Activated CD8-positive, alpha-beta T cell treated with anti-CD3 and anti-CD28 coated beads, Interleukin-2, amount 10 ng/mL, durations not matched to agents 7 days and 5 days (primary cell): ENCODE measurements at regions of chr11 and their contacts with region 1.

Region 1: DNA sequence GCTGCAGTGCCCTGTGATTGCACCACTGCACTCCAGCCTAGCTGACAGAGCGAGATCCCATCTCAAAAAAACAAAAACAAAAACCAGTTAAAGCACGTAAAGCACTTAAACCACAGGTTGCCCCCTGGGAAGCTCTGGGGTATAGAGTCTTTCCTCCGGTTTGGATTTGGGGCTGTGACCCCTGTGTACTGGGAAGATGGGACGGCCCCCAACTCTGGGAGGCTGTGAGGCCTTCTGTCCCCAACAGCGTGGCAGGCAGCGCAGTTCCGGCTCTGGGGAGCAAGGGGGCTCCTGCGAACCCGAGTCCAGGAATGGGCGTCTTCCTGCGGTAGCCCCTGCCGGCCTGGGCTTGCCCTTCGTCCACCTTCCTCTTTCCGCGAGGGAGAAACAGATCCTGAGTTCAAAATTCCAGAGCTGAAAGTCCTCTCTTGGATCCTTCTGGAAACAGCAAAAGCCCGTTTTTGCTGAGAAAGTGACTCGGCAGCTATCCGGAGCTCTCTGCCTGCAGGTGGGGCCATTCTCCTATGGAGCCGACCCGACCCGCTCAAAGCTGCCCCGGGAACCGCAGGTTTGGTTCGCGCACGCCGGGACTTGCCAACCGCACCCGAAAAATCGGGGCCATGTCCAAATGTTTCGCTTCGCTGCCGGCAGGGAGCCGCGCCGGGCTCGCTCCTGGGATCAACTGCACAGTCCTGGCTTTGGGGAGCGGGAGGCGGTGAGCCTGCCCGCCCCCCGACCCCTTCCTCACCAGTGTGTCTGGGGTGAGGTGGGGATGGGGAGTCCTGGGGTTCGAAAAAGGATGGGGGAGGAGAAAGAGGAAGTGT is 36.3 kb upstream of the POLA2 start:
- DNase-seq: peak; percentile 67
- ATAC-seq: peak; percentile 86
- H3K4me3 Mint-ChIP-seq: peak overlapping the region; percentile 72
- H3K27ac Mint-ChIP-seq: no peak overlapping the region
- H3K4me1 Mint-ChIP-seq: peaks cover 27% of the 10 kb centered on the region
- H3K27me3 Mint-ChIP-seq: peaks cover 18% of the 10 kb centered on the region

Region 2: GRCh38 chr11:64996710-64997380 is 228.6 kb before region 1 on chr11 and contains the start of gene BATF2:
- CTCF ChIA-PET with region 1: no interaction called
- POLR2A ChIA-PET with region 1: no interaction called
- DNase-seq: peak; percentile 41
- ATAC-seq: peak; percentile 67
- H3K4me3 Mint-ChIP-seq: peak within 1 kb of the TSS; percentile 46
- H3K27ac Mint-ChIP-seq: peak within 1 kb of the TSS; percentile 79
- H3K4me1 Mint-ChIP-seq: peaks cover 33% of the 10 kb centered on the region
- H3K27me3 Mint-ChIP-seq: peaks cover 2% of the 10 kb centered on the region
- total RNA-seq, gene BATF2: 0.50 to 0.99 TPM

Region 3: GRCh38 chr11:65251476-65251875 is 26.0 kb after region 1 on chr11:
- CTCF ChIA-PET with region 1: interaction called, 24 read pairs
- POLR2A ChIA-PET with region 1: no interaction called
- DNase-seq: no peak
- ATAC-seq: no peak
- H3K4me3 Mint-ChIP-seq: no peak overlapping the region
- H3K27ac Mint-ChIP-seq: no peak overlapping the region
- H3K4me1 Mint-ChIP-seq: no peaks in the 10 kb centered on the region
- H3K27me3 Mint-ChIP-seq: peaks cover 6% of the 10 kb centered on the region